Activated CD4-positive, alpha-beta memory T cell treated with anti-CD3 and anti-CD28 coated beads for 36 hours (primary cell): ENCODE measurements at regions of chr20 and their contacts with region 1.

Region 1: DNA sequence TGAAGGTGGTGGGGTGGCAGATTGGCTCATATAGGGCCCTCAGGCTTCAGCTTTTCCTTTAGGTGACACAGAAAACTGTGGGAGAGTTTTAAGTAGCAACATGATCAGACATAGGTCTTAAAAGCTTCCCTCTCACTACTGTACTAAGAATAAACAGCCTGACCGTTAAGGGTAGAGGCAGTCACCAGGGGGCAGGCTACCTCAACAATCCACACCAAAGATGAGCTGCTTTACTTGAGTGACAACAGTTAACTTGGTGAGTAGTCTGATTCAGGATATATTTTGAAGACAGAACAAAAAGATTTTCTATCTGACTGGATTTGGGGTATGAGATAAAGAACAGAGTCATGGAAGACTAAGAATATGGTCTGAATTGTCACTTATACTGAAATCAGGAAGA is 193.1 kb upstream of the SHLD1 start:
- DNase-seq: peak; percentile 79
- H3K4me3 Mint-ChIP-seq: no peak overlapping the region
- H3K27ac Mint-ChIP-seq: peak overlapping the region; percentile 21
- H3K4me1 Mint-ChIP-seq: peaks cover 5% of the 10 kb centered on the region
- H3K27me3 Mint-ChIP-seq: no peaks in the 10 kb centered on the region

Region 2: GRCh38 chr20:5513975-5514516 is 43.1 kb before region 1 on chr20:
- CTCF ChIA-PET with region 1: no interaction called
- POLR2A ChIA-PET with region 1: no interaction called
- intact Hi-C with region 1: no loop called
- DNase-seq: no peak
- H3K4me3 Mint-ChIP-seq: no peak overlapping the region
- H3K27ac Mint-ChIP-seq: no peak overlapping the region
- H3K4me1 Mint-ChIP-seq: peaks cover 4% of the 10 kb centered on the region
- H3K27me3 Mint-ChIP-seq: no peaks in the 10 kb centered on the region

Region 3: GRCh38 chr20:5608442-5609161 is 51.5 kb after region 1 on chr20:
- CTCF ChIA-PET with region 1: interaction called, 4 read pairs
- POLR2A ChIA-PET with region 1: no interaction called
- intact Hi-C with region 1: loop called (anchors 2 kb)
- DNase-seq: no peak
- H3K4me3 Mint-ChIP-seq: peak overlapping the region; percentile 87
- H3K27ac Mint-ChIP-seq: peak overlapping the region; percentile 98
- H3K4me1 Mint-ChIP-seq: peaks cover 52% of the 10 kb centered on the region
- H3K27me3 Mint-ChIP-seq: no peaks in the 10 kb centered on the region

Region 4: GRCh38 chr20:5779071-5779900 is 222.2 kb after region 1 on chr20:
- CTCF ChIA-PET with region 1: interaction called, 16 read pairs
- POLR2A ChIA-PET with region 1: no interaction called
- intact Hi-C with region 1: no loop called
- DNase-seq: no peak
- H3K4me3 Mint-ChIP-seq: no peak overlapping the region
- H3K27ac Mint-ChIP-seq: no peak overlapping the region
- H3K4me1 Mint-ChIP-seq: peaks cover 13% of the 10 kb centered on the region
- H3K27me3 Mint-ChIP-seq: no peaks in the 10 kb centered on the region